Astrocyte of the cerebellum (primary cell): ENCODE measurements at regions of chr7 and their contacts with region 1.

Region 1: DNA sequence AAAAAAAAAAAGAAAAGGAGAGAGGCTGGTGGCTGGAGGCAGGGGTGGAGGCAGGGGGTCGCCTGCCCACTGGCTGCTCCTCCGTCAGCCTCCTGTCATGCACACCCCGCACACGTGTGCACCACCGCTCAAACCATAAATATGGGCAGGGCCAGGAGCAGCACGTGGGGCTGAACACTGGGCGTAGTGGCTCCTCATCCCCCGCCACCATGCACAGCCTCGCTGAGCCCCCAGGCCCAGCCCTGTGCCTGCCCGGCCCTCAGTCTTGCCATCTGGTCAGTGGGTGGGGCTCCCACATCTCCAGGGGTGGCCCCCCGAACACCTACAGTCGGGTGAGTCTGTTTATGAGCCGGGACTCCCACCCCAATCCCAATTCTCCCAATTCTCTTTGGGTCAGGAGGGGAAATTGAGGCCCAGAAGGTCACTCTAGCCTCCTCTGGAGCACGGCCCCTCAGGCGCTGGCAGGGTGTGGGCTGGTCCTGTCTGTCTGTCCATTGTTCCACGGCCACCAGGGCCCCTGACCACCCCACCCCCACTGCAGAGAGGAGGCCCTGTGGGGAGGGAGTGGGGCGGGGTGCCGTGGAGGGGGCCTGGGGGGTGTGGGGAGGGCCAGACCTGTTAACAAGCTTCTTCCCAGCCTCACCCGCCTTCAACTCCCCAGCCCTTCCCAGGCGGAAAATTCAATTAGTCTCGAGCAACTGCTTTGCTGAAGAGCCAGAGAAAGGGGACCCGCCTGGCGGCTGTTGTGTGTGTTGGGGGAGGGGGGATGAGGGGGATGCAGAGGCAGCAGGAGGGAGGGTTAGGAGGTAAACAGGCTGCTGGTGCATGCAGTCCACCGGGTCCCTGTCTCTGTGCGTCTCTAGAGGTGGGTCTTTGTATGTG is 19.5 kb upstream of the GRIFIN start:
- DNase-seq: no peak
- H3K4me3 ChIP-seq: no peak overlapping the region
- CTCF ChIP-seq: no peak

Region 2: GRCh38 chr7:2431260-2431867 is 64.3 kb before region 1 on chr7:
- in situ Hi-C with region 1: loop called (anchors 10 kb)
- DNase-seq: no peak
- H3K4me3 ChIP-seq: no peak overlapping the region
- CTCF ChIP-seq: peak; percentile 51

Region 3: GRCh38 chr7:2451171-2452073 is 44.2 kb before region 1 on chr7:
- in situ Hi-C with region 1: no loop called
- DNase-seq: peak; percentile 29
- H3K4me3 ChIP-seq: peak overlapping the region; percentile 16
- CTCF ChIP-seq: peak; percentile 82

Region 4: DNA sequence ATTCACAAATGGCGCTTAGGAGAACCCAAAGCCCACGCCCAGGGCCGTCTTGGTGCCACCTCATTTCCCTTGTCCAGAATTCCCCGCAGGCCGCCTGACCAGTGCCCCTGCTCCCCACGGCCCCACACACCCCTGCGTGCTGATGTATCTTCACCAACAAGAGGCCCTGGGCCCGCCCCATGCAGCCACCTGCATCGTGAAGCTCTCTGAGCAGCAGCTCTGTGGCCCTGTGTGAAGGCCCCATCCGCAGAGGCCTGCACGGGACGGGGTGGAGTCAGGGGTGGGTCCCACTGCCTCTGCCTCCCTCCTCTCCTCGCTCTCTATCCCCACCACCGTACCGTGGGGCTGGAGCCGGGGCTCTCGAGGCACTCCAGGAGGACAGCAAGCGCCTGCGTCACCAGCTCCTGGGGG is 45.0 kb after region 1 on chr7:
- in situ Hi-C with region 1: no loop called
- DNase-seq: no peak
- H3K4me3 ChIP-seq: no peak overlapping the region
- CTCF ChIP-seq: no peak

Region 5: DNA sequence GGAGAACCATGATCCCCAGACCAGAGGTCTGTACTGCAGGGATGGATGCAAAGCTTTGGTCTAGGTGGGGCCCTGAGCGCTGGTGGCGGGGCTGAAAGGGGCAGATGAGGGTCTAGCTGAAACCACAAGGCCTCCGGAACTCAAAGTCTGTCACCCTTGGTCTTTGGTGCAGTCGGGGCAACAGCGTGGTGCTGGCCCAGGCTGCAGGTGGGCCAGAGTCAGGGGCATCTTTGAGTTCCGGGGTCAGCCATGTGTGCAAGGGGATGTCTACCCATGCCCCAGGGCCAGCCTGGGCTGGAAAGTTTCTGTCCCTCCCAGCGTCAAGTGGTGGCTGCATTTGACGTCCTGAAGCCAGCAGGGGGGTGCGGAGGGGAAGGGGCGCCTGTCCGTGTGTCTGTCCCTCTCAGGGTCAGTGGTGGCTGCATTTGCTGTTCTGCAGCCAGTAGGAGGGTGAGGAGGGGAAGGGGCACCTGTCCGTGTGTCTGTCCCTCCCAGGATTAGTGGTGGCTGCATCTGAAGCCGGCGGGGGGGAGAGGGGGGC is 59.0 kb after region 1 on chr7:
- in situ Hi-C with region 1: loop called (anchors 5 kb)
- DNase-seq: no peak
- H3K4me3 ChIP-seq: peak overlapping the region; percentile 61
- CTCF ChIP-seq: no peak